Left ventricle myocardium superior (tissue), 1 donor: ENCODE measurements at regions of chr10 and their contacts with region 1.

Region 1: DNA sequence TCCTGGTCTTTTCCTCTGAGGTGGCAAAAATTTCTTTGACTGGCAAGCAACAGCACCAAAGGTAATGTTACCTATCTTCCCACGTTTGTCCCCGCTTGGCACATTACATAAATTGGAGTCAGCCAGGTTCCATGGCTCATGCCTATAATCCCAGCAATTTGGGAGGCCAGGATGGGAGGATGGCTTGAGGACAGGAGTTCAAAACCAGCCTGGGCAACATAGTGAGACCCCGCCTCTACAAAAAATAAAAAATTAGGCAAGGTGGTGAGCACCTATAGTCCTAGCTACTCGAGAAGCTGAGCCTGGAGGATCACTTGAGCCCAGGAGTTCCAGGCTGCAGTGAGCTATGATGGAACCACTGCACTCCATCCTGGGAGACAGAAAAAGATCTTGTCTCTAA is 139.5 kb downstream of the IDE start:
- DNase-seq: no peak
- ATAC-seq: no peak

Region 2: DNA sequence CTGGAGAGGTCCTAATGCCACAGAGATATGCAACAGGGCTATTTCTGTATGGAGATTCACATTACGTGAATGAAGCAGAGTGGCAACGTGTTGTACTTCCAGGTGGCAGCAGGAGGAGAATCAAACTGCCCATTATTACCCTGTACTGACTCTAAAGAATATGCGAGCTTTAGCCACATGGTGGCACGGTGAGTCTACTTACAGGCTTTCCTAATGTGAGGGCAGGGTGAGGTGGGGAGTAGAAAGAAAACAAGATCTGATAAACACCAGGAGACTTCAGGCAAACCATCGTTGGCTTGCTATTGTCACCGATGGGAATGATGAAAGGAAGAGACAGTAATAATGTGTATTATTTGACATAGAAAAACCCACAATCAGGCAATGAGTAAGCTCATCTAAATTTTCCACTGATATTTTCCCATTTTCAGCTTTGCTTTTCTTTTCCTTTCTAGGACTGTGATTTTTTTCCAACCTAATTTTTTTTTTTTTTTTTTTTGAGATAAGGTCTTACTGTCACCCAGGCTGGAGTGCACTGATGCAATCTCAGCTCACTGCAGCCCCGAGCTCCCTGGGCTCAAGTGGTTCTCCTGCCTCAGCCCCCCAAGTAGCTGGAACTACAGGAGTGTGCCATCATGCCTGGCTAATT is 346.5 kb before region 1 on chr10:
- intact Hi-C with region 1: loop called (anchors 2 kb)
- DNase-seq: peak; percentile 47
- ATAC-seq: peak; percentile 91